ENCODE measurements at regions of chr21 and their contacts with region 1.

Region 1: GRCh38 chr21:34845521-34846451 is 177.0 kb downstream of the CLIC6 start:
- H3K4me3 ChIP-seq: no peak overlapping the region
- H3K27ac ChIP-seq: peak overlapping the region; percentile 96
- H3K4me1 ChIP-seq: peaks cover 39% of the 10 kb centered on the region
- CTCF ChIP-seq: no peak

Region 2: GRCh38 chr21:34679051-34679450 is 166.7 kb before region 1 on chr21:
- CTCF ChIA-PET with region 1: no interaction called
- POLR2A ChIA-PET with region 1: no interaction called
- H3K4me3 ChIP-seq: no peak overlapping the region
- H3K27ac ChIP-seq: no peak overlapping the region
- H3K4me1 ChIP-seq: no peaks in the 10 kb centered on the region
- CTCF ChIP-seq: no peak

Region 3: DNA sequence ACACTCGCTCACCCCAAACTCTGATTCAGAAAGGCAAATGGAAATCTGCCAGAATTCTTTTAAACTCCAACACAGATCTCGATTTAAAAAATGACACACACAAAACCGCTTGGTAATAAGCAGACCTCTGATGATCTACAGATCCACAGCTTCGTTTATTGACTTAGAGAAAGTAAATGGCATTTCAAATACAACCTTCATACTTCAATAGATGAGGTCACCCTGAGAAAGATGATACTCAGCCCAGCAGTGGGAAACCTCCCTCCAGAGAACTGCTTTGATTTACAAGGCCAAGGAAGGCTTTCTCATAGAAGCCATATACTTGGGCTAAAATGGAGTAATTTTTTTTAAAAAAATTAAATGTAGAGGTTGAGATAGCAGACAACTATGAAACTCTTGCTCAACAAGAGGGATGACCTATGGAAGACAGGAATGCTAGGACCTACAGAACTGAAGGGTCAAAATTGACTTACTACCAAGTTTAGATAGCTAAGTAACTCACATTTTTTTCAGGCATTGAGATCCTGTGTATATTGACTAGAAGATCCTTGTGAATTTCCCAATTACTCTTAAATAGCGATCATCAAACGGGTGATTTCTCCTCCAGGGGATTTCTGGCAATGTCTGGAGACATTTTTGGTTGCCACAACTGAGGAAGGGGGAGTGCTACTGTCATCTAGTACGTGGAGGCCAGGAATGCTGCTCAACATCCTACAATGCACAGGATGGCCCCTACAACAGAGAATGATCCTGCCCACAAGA is 33.1 kb before region 1 on chr21:
- CTCF ChIA-PET with region 1: no interaction called
- POLR2A ChIA-PET with region 1: interaction called, 13 read pairs
- H3K4me3 ChIP-seq: no peak overlapping the region
- H3K27ac ChIP-seq: no peak overlapping the region
- H3K4me1 ChIP-seq: peaks cover 15% of the 10 kb centered on the region
- CTCF ChIP-seq: no peak

Region 4: DNA sequence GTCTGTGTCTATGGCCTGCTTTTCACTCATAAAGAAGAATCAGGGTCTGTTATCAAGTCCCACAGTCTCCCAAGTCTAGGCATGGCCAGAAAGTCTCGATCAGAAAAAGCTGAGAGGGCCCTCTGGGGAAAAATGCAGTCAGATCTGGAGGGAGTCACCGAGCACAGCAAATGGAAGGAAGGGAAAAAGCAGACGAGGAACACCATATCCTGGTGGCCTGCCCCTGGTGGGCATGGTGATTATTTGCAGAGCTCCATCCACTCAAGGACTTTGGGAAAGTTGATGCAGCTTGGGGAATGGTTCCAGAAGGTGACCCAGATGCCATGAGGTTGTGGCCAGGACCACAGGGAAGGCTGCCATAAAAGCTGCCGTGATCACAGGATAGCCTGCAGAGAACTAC is 12.1 kb after region 1 on chr21:
- CTCF ChIA-PET with region 1: interaction called, 10 read pairs
- POLR2A ChIA-PET with region 1: interaction called, 9 read pairs
- H3K4me3 ChIP-seq: no peak overlapping the region
- H3K27ac ChIP-seq: no peak overlapping the region
- H3K4me1 ChIP-seq: peaks cover 11% of the 10 kb centered on the region
- CTCF ChIP-seq: peak; percentile 74

Measured in HEK293 (cell line).